Activated naive CD4-positive, alpha-beta T cell treated with anti-CD3 and anti-CD28 coated beads for 36 hours (primary cell): ENCODE measurements at regions of chr2 and their contacts with region 1.

Region 1: GRCh38 chr2:37389989-37390765 is 45.7 kb downstream of the QPCT start:
- DNase-seq: peak; percentile 87
- H3K4me3 Mint-ChIP-seq: no peak overlapping the region
- H3K27ac Mint-ChIP-seq: peak overlapping the region; percentile 71
- H3K4me1 Mint-ChIP-seq: peaks cover 13% of the 10 kb centered on the region
- H3K27me3 Mint-ChIP-seq: no peaks in the 10 kb centered on the region

Region 2: DNA sequence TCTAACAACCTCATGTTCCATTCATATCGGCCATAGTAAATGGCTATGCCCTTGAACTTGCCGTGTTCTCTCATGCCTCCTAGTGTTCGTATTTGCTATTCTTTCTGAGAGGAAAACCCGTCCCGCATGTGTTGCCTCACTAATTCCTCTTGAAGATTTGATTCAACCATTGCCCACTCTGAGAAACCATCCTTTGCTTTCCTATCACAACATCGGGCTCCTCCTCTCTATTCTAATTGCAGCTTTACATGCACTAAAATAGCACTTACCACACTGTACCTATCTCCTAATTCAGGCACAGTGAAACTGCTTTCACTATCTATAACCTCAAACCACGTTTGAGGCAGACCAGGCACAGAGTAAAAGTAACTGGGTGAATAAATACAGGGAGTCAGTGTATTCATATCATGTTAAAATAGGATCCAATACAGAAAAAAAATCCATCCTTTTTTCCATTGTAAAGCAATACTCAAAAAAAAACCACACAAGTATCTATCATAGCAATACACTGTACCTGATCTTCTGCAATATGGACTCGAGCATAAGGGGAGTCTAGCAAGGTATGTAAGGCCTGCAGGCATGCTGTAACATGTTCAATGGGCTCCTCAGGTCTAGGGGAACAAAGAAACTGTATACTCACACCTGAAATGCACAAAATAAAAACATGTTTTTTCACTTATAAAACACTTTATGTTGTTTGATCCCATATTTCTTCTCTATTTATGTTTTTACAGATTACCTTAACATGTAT is 384.9 kb before region 1 on chr2:
- CTCF ChIA-PET with region 1: no interaction called
- intact Hi-C with region 1: no loop called
- DNase-seq: peak; percentile 54
- H3K4me3 Mint-ChIP-seq: peak overlapping the region; percentile 23
- H3K27ac Mint-ChIP-seq: peak overlapping the region; percentile 26
- H3K4me1 Mint-ChIP-seq: peaks cover 10% of the 10 kb centered on the region
- H3K27me3 Mint-ChIP-seq: no peaks in the 10 kb centered on the region

Region 3: GRCh38 chr2:37231241-37232130 is 158.7 kb before region 1 on chr2 and contains the starts of genes CEBPZ and NDUFAF7:
- CTCF ChIA-PET with region 1: interaction called, 3 read pairs
- intact Hi-C with region 1: loop called (anchors 2 kb)
- DNase-seq: peak; percentile 96
- H3K4me3 Mint-ChIP-seq: no peak within 1 kb of the TSS
- H3K27ac Mint-ChIP-seq: no peak within 1 kb of the TSS
- H3K4me1 Mint-ChIP-seq: peaks cover 40% of the 10 kb centered on the region
- H3K27me3 Mint-ChIP-seq: no peaks in the 10 kb centered on the region
- total RNA-seq, gene CEBPZ: 61.4 to 65.0 TPM
- total RNA-seq, gene NDUFAF7: 17.5 to 18.2 TPM

Region 4: GRCh38 chr2:37250869-37251740 is 139.1 kb before region 1 on chr2:
- CTCF ChIA-PET with region 1: no interaction called
- intact Hi-C with region 1: no loop called
- DNase-seq: no peak
- H3K4me3 Mint-ChIP-seq: no peak overlapping the region
- H3K27ac Mint-ChIP-seq: no peak overlapping the region
- H3K4me1 Mint-ChIP-seq: peaks cover 2% of the 10 kb centered on the region
- H3K27me3 Mint-ChIP-seq: no peaks in the 10 kb centered on the region

Region 5: DNA sequence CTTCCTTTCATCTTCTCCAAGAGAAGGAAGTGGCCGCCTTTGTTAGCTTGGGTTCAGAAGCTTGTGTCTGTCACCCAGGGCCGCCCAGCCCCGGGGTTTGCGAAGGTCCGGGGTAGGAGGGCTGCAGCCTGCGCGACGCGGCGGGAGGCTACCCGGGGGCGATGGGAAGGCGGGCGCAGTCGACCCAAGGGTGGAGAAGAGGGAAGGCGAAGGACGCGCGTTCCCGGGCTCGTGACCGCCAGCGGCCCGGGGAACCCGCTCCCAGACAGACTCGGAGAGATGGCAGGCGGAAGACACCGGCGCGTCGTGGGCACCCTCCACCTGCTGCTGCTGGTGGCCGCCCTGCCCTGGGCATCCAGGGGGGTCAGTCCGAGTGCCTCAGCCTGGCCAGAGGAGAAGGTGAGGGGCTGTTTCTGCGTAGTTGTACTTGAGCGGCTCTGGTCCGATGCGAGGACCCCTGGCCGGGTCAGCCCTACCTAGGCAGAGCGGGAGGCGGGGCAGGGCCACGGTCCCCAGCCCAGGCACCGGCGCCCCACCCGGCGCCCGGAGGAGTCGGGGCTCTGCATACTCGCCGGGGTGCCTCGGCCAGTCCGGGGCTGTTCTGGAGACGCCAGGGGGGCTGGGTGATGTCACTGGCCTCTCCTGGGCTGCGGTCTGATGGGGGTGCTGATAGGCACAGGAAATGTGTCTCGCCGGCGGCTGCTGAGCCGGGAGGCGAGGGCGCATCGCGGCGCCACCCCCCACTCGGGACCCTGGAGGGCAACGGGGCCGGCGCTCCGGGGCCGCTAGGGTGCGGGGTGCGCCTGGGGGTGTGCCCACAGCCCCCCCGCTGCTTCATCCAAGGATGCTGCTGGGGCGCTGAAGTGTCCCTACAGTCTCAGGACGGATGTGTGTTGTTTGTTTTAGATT is 45.5 kb before region 1 on chr2 and contains the start of gene QPCT:
- CTCF ChIA-PET with region 1: interaction called, 3 read pairs
- intact Hi-C with region 1: loop called (anchors 2 kb)
- DNase-seq: peak; percentile 60
- H3K4me3 Mint-ChIP-seq: peak within 1 kb of the TSS; percentile 72
- H3K27ac Mint-ChIP-seq: no peak within 1 kb of the TSS
- H3K4me1 Mint-ChIP-seq: peaks cover 9% of the 10 kb centered on the region
- H3K27me3 Mint-ChIP-seq: peaks cover 32% of the 10 kb centered on the region
- total RNA-seq, gene QPCT: 0.42 TPM in 1 of 2 experiments, not detected in the other

Region 6: GRCh38 chr2:37441055-37441454 is 50.9 kb after region 1 on chr2:
- CTCF ChIA-PET with region 1: no interaction called
- intact Hi-C with region 1: no loop called
- DNase-seq: no peak
- H3K4me3 Mint-ChIP-seq: no peak overlapping the region
- H3K27ac Mint-ChIP-seq: no peak overlapping the region
- H3K4me1 Mint-ChIP-seq: no peaks in the 10 kb centered on the region
- H3K27me3 Mint-ChIP-seq: no peaks in the 10 kb centered on the region

Region 7: GRCh38 chr2:37585982-37586621 is 195.9 kb after region 1 on chr2:
- CTCF ChIA-PET with region 1: no interaction called
- intact Hi-C with region 1: loop called (anchors 1 kb)
- DNase-seq: peak; percentile 85
- H3K4me3 Mint-ChIP-seq: peak overlapping the region; percentile 25
- H3K27ac Mint-ChIP-seq: peak overlapping the region; percentile 67
- H3K4me1 Mint-ChIP-seq: peaks cover 76% of the 10 kb centered on the region
- H3K27me3 Mint-ChIP-seq: no peaks in the 10 kb centered on the region

Region 8: GRCh38 chr2:37623971-37624900 is 234.1 kb after region 1 on chr2:
- CTCF ChIA-PET with region 1: no interaction called
- intact Hi-C with region 1: no loop called
- DNase-seq: peak; percentile 43
- H3K4me3 Mint-ChIP-seq: no peak overlapping the region
- H3K27ac Mint-ChIP-seq: peak overlapping the region; percentile 38
- H3K4me1 Mint-ChIP-seq: peaks cover 67% of the 10 kb centered on the region
- H3K27me3 Mint-ChIP-seq: no peaks in the 10 kb centered on the region

Region 9: DNA sequence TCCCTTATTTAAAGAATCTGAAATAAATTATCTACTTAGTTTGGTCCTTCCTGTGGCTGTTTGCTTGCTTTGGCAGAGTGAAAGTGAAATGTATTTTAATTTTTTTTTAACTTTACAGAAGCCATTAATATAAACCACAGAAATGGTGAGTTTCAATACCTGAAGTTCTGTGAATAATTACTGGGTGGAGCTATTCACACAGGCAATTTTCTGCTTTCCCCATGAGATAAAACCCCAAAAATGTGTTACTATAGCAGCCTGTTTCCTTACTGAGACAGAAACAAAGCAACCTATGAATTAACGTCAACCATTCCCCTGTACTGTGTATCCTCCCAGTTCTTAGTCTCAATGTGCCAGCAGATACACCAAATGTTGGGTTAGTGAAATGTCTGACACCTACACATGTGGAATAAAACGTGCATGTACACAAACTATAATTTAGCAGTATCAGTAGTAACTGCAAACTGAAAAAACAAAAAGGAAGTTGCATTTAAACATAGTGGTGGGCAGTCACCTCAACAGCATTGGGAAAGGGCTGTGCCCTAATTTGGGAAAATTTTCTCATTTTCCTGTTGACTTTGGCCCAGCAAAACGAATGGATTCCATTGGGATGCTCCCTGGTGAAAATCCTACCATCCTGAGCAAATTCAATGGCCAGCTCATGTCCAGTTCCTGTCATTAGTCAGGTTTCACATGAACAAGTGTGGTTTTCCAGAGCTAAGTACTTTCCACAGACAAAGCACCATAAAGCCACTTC is 461.8 kb after region 1 on chr2:
- CTCF ChIA-PET with region 1: interaction called, 3 read pairs
- intact Hi-C with region 1: loop called (anchors 1 kb)
- DNase-seq: no peak
- H3K4me3 Mint-ChIP-seq: peak overlapping the region; percentile 17
- H3K27ac Mint-ChIP-seq: peak overlapping the region; percentile 81
- H3K4me1 Mint-ChIP-seq: peaks cover 26% of the 10 kb centered on the region
- H3K27me3 Mint-ChIP-seq: peaks cover 6% of the 10 kb centered on the region

Region 10: GRCh38 chr2:38115216-38116032 is 725.2 kb after region 1 on chr2:
- CTCF ChIA-PET with region 1: no interaction called
- intact Hi-C with region 1: loop called (anchors 5 kb)
- DNase-seq: peak; percentile 92
- H3K4me3 Mint-ChIP-seq: no peak overlapping the region
- H3K27ac Mint-ChIP-seq: no peak overlapping the region
- H3K4me1 Mint-ChIP-seq: no peaks in the 10 kb centered on the region
- H3K27me3 Mint-ChIP-seq: peaks cover 13% of the 10 kb centered on the region